ENCODE measurements at regions of chr17 and their contacts with region 1.

Region 1: GRCh38 chr17:64129764-64130558 is at the start of gene ERN1:
- DNase-seq: peak; percentile 54
- ATAC-seq: peak; percentile 89
- H3K4me3 ChIP-seq: peak within 1 kb of the TSS; percentile 93
- H3K27ac ChIP-seq: peak within 1 kb of the TSS; percentile 83
- H3K4me1 ChIP-seq: peaks cover 32% of the 10 kb centered on the region
- H3K27me3 ChIP-seq: no peaks in the 10 kb centered on the region
- CTCF ChIP-seq: 0 out of 6 replicates have a peak, but pooled peaks of 1 of the 3 experiments have one; percentile 0
- EP300 ChIP-seq: no peak
- POLR2A ChIP-seq: peak; percentile 98
- RAD21 ChIP-seq: no peak
- polyA plus RNA-seq, gene ERN1: 2.6 to 3.4 TPM

Region 2: DNA sequence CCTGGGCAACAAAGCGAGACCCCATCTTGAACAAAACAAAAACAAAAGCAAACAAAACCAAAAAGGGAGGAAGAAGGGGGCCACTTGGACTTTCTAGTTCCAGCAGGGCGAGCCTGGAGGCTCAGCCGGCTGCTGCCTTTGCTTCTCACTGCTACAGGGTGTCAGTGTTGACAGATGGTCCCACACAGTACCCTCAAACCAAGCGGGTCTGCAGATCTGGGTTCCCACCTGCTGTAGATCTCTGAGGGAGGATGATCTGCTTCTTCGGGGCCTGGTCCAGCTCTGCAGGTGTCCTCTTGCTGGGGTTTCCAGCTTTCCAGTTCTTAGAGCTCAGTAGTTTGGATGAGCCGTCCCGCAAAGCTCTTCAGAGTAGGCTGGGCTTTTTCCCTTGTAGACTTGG is 225.6 kb before region 1 on chr17:
- CTCF ChIA-PET with region 1: interaction called, 12 read pairs
- POLR2A ChIA-PET with region 1: interaction called, 5 read pairs
- RAD21 ChIA-PET with region 1: interaction called, 4 read pairs
- SMC1A ChIA-PET with region 1: interaction called, 19 read pairs
- in situ Hi-C with region 1: no loop called
- intact Hi-C with region 1: no loop called
- DNase-seq: no peak
- ATAC-seq: no peak
- H3K4me3 ChIP-seq: no peak overlapping the region
- H3K27ac ChIP-seq: no peak overlapping the region
- H3K4me1 ChIP-seq: no peaks in the 10 kb centered on the region
- H3K27me3 ChIP-seq: no peaks in the 10 kb centered on the region
- CTCF ChIP-seq: no peak
- EP300 ChIP-seq: no peak
- POLR2A ChIP-seq: no peak
- RAD21 ChIP-seq: no peak

Region 3: GRCh38 chr17:63946440-63947367 is 183.3 kb before region 1 on chr17:
- CTCF ChIA-PET with region 1: interaction called, 45 read pairs
- POLR2A ChIA-PET with region 1: interaction called, 3 read pairs
- RAD21 ChIA-PET with region 1: interaction called, 52 read pairs
- SMC1A ChIA-PET with region 1: interaction called, 12 read pairs
- in situ Hi-C with region 1: no loop called
- intact Hi-C with region 1: no loop called
- DNase-seq: no peak
- ATAC-seq: peak; percentile 92
- H3K4me3 ChIP-seq: peak overlapping the region; percentile 39; the same call in 1 of the 2 replicates
- H3K27ac ChIP-seq: peak overlapping the region; percentile 86
- H3K4me1 ChIP-seq: peaks cover 18% of the 10 kb centered on the region
- H3K27me3 ChIP-seq: no peaks in the 10 kb centered on the region
- CTCF ChIP-seq: peak; percentile 65 to 85 (median 78)
- EP300 ChIP-seq: no peak
- POLR2A ChIP-seq: 0 out of 2 replicates have a peak, but pooled peaks have one; percentile 49
- RAD21 ChIP-seq: peak; percentile 65

Region 4: DNA sequence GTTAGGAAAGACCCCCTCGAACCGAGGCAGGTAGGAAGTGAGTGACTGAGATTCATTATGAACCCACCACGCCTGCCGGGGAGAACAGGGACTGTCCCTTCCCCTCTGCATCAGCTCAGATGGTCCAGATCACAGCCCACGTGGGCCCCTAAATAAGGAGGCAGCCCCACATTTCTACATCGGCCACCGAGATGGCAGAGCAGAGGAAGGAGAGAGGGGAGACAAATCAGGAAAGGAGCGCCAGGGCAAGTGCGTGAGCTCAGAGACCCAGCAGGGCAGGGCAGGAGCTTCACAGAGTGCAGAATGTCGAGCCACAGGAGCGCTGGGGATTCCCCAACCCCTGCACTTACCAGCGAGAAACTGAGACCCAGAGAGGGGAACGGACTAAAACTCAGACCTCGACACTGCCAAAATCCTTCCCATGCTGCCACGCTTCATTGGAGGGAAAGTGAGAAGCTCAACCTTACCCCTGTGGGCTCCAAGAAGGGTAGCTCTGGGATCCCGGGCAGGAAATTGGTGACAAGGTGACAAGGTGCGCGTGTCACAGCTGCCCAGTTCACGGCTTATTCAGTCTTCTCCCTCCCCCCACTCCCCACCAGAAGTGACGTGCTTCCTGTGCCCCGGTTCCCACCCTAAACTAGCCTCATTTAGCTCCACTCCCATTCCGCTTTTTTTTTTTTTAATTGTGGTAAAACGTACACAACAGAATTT is 109.8 kb before region 1 on chr17 and contains the start of gene ICAM2:
- CTCF ChIA-PET with region 1: interaction called, 915 read pairs
- POLR2A ChIA-PET with region 1: interaction called, 86 read pairs
- RAD21 ChIA-PET with region 1: interaction called, 507 read pairs
- SMC1A ChIA-PET with region 1: interaction called, 570 read pairs
- in situ Hi-C with region 1: loop called (anchors 5 kb)
- intact Hi-C with region 1: no loop called
- DNase-seq: peak; percentile 90
- ATAC-seq: peak; percentile 79
- H3K4me3 ChIP-seq: peak within 1 kb of the TSS; percentile 74
- H3K27ac ChIP-seq: peak within 1 kb of the TSS; percentile 98
- H3K4me1 ChIP-seq: peaks cover 16% of the 10 kb centered on the region
- H3K27me3 ChIP-seq: no peaks in the 10 kb centered on the region
- CTCF ChIP-seq: peak in 1 of 3 experiments; percentile 15; a peak in 1 of 6 replicates
- EP300 ChIP-seq: peak in 1 of 2 experiments; percentile 73; a peak in 2 of 4 replicates
- POLR2A ChIP-seq: peak; percentile 76
- RAD21 ChIP-seq: no peak
- polyA plus RNA-seq, gene ICAM2: 23.6 to 27.7 TPM

Region 5: GRCh38 chr17:64056269-64057005 is 73.5 kb before region 1 on chr17:
- CTCF ChIA-PET with region 1: interaction called, 140 read pairs
- POLR2A ChIA-PET with region 1: interaction called, 15 read pairs
- RAD21 ChIA-PET with region 1: interaction called, 120 read pairs
- SMC1A ChIA-PET with region 1: interaction called, 151 read pairs
- in situ Hi-C with region 1: no loop called
- intact Hi-C with region 1: no loop called
- DNase-seq: peak; percentile 57
- ATAC-seq: peak; percentile 88
- H3K4me3 ChIP-seq: no peak overlapping the region
- H3K27ac ChIP-seq: peak overlapping the region; percentile 35
- H3K4me1 ChIP-seq: peaks cover 30% of the 10 kb centered on the region
- H3K27me3 ChIP-seq: no peaks in the 10 kb centered on the region
- CTCF ChIP-seq: peak in 1 of 3 experiments; percentile 13; a peak in 1 of 6 replicates
- EP300 ChIP-seq: peak in 1 of 2 experiments; percentile 43; a peak in 1 of 4 replicates
- POLR2A ChIP-seq: no peak
- RAD21 ChIP-seq: 0 out of 2 replicates have a peak, but pooled peaks have one; percentile 13

Region 6: DNA sequence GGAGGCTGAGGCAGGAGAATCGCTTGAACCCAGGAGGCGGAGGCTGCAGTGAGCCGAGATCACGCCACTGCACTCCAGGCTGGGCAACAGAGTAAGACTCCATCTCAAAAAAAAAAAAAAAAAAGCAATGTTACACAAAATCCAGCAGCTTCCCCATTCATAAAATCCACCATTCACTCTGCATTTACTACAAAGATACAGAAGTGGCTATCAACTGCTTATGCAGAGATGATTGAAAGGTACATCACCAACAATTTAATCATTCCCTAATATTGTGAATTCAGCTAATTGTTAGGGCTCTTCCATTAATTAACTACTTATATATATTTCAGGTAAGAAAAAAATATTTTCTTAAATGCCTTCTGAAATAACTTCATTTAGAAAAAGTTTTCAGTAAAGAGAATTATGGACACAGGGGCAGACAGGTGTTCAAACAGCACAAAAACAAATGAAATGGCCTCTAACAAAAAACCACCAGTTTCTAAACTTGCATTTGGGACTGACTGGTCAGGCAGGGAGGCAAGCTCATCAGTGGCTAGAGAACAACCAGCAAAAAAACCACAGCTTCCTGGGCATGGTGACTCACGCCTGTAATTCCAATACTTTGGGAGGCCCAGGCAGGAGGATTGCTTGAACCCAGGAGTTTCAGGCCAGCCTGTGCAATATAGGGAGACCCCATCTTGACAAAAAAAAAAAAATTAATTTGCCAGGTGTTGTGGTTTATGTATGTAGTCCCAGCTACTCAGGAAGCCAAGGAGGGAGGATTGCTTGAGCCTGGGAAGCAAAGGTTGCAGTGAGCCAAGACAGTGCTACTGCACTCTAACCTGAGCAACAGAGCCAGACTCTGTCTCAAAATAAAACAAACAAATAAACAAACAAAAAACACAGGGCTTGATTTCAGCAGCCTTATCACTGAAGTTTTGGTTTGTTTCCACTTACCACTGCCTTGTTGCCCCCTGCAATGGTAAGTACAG is 26.3 kb before region 1 on chr17:
- CTCF ChIA-PET with region 1: interaction called, 16 read pairs
- POLR2A ChIA-PET with region 1: interaction called, 22 read pairs
- RAD21 ChIA-PET with region 1: interaction called, 23 read pairs
- SMC1A ChIA-PET with region 1: interaction called, 8 read pairs
- in situ Hi-C with region 1: no loop called
- intact Hi-C with region 1: no loop called
- DNase-seq: peak; percentile 55
- ATAC-seq: peak; percentile 65
- H3K4me3 ChIP-seq: no peak overlapping the region
- H3K27ac ChIP-seq: peak overlapping the region; percentile 57
- H3K4me1 ChIP-seq: peaks cover 39% of the 10 kb centered on the region
- H3K27me3 ChIP-seq: no peaks in the 10 kb centered on the region
- CTCF ChIP-seq: no peak
- EP300 ChIP-seq: no peak
- POLR2A ChIP-seq: no peak
- RAD21 ChIP-seq: no peak

Region 7: GRCh38 chr17:64236853-64237277 is 106.9 kb after region 1 on chr17:
- CTCF ChIA-PET with region 1: no interaction called
- POLR2A ChIA-PET with region 1: no interaction called
- RAD21 ChIA-PET with region 1: no interaction called
- SMC1A ChIA-PET with region 1: no interaction called
- in situ Hi-C with region 1: no loop called
- intact Hi-C with region 1: no loop called
- DNase-seq: no peak
- ATAC-seq: 0 out of 3 replicates have a peak, but pooled peaks have one; percentile 32
- H3K4me3 ChIP-seq: no peak overlapping the region
- H3K27ac ChIP-seq: no peak overlapping the region
- H3K4me1 ChIP-seq: no peaks in the 10 kb centered on the region
- H3K27me3 ChIP-seq: no peaks in the 10 kb centered on the region
- CTCF ChIP-seq: peak in 1 of 3 experiments; percentile 21; a peak in 2 of 6 replicates
- EP300 ChIP-seq: no peak
- POLR2A ChIP-seq: no peak
- RAD21 ChIP-seq: no peak

Measured in GM12878 (cell line).